ENCODE measurements at regions of chr1 and their contacts with region 1.

Region 1: DNA sequence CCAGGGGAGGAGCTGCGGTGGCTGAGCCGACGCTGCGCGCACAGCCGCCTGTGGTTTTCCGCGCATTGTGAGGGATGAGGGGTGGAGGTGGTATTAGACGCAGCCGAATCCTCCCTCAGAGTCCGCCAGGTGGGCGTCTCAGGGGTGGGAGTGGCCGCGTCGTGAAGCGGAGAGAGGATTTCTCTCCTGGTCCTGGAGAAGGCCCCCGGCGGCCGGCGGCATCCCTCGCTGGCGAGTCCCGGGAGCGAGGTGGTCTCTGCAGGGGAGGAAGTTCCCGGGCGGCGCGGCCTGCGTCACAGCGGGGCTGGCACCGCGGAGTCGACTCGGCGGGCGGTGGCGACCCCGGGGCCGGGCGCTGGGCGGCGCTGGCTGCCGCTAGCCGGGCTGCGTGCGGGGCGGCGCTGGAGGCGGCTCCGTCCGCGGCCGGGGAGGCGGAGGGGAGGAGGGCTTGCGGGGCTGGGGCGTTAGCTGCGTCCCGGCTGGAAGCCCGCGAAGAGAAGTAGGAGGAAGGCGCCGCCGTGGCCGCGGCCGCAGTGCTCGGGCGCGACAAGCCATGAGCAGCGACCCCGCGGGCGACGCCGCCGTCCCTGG is at the start of gene LRRC8C:
- DNase-seq: peak; percentile 84
- H3K4me3 Mint-ChIP-seq: peak within 1 kb of the TSS; percentile 92
- H3K27ac Mint-ChIP-seq: peak within 1 kb of the TSS; percentile 93
- H3K4me1 Mint-ChIP-seq: peaks cover 72% of the 10 kb centered on the region
- H3K27me3 Mint-ChIP-seq: no peaks in the 10 kb centered on the region
- total RNA-seq, gene LRRC8C: 56.1 and 56.5 TPM in 2 replicates

Region 2: GRCh38 chr1:89605692-89606091 is 27.1 kb before region 1 on chr1:
- intact Hi-C with region 1: loop called (anchors 1 kb)
- DNase-seq: no peak
- H3K4me3 Mint-ChIP-seq: peak overlapping the region; percentile 5
- H3K27ac Mint-ChIP-seq: peak overlapping the region; percentile 99
- H3K4me1 Mint-ChIP-seq: peaks cover 90% of the 10 kb centered on the region
- H3K27me3 Mint-ChIP-seq: no peaks in the 10 kb centered on the region

Region 3: DNA sequence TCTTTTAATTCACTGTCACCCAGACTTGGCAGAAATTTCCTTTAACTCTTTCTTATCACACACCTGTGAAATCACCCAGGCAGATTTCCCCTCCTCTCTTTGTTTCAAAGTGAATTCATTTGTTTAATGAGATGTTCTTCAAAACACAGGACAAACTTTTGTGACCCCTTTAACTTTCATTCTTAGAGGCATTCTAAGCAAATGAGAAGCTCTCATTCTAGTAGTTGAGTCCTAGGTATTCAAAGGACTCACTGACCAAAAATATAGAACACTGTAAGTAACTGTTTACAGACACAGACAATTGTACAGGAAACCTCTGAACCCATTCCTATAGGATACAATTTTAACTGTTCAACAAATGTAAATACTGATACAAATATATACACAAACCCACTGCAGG is 17.0 kb after region 1 on chr1:
- intact Hi-C with region 1: loop called (anchors 1 kb)
- DNase-seq: no peak
- H3K4me3 Mint-ChIP-seq: no peak overlapping the region
- H3K27ac Mint-ChIP-seq: peak overlapping the region; percentile 44
- H3K4me1 Mint-ChIP-seq: peaks cover 56% of the 10 kb centered on the region
- H3K27me3 Mint-ChIP-seq: no peaks in the 10 kb centered on the region

Region 4: GRCh38 chr1:89670163-89670562 is 37.4 kb after region 1 on chr1:
- intact Hi-C with region 1: loop called (anchors 5 kb)
- DNase-seq: no peak
- H3K4me3 Mint-ChIP-seq: peak overlapping the region; percentile 44
- H3K27ac Mint-ChIP-seq: peak overlapping the region; percentile 83
- H3K4me1 Mint-ChIP-seq: peaks cover 85% of the 10 kb centered on the region
- H3K27me3 Mint-ChIP-seq: no peaks in the 10 kb centered on the region

Region 5: DNA sequence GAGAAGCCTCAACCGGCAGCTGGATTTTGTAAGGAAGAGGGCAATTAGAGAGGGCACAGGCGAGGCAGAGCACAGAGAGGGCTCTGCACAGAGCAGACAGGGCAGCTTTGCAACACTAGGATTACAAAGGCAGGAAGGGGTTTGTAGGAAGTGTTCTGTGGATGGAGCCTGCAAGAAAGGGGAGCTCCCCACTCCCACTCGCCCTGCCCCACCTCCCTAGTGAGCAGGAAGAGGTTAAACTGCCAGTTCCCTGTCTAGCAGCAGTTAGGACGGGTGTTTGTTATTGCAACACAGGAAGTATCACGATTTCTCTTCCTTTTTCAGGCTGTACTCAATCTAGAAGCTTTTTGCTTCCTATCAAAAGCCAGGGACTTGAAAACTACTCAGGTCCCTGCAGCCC is 124.8 kb after region 1 on chr1:
- intact Hi-C with region 1: loop called (anchors 1 kb)
- DNase-seq: peak; percentile 57
- H3K4me3 Mint-ChIP-seq: peak overlapping the region; percentile 77
- H3K27ac Mint-ChIP-seq: peak overlapping the region; percentile 93
- H3K4me1 Mint-ChIP-seq: peaks cover 82% of the 10 kb centered on the region
- H3K27me3 Mint-ChIP-seq: no peaks in the 10 kb centered on the region

Region 6: DNA sequence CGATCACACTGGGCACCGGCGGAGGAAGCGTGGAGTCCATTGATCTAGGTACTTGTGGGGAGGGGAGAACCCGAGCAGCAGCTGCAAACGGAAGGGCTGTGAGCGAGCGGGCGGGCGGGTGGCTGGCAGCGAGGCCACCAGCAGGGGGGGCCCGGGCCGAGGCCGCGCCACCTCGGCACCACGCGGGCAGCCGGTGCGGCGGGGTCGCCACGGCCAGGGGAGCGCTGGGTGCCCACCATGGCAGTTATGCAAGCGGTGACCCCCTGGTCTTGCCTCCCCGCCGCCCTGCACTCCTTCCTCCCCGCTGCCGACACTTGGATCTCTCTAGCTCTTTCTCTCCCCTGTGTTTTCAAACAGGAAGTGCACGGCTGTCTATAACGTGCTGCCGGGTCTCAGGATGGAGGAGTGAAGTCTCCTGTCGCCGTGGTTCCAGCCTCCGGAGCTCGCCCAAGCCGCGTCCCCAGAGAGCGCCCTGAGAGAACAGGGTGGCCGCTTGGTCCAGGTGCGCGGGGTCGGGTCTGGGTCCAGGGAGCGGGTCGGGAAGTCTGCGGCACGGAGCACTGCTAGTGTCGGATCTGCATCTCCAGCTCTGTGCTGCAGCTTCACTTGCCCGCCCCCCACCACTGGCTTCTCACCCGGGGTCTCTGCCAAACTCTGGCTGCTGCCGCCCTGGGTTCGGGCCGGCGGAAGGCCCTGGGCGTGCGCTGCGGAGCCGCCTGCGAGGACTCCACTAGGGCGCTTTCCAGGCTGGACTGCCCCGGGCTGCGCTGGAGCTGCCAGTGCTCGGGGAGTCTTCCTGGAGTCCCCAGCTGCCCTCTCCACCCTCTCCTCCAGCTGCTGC is 210.7 kb after region 1 on chr1:
- intact Hi-C with region 1: loop called (anchors 5 kb)
- DNase-seq: peak; percentile 74
- H3K4me3 Mint-ChIP-seq: peak overlapping the region; percentile 93
- H3K27ac Mint-ChIP-seq: peak overlapping the region; percentile 94
- H3K4me1 Mint-ChIP-seq: peaks cover 68% of the 10 kb centered on the region
- H3K27me3 Mint-ChIP-seq: no peaks in the 10 kb centered on the region

Measured in activated T-helper 2 cell treated with anti-CD3 and anti-CD28 coated beads, Interferon-gamma antibody, Interleukin-2, Interleukin-4, amounts not matched to agents 10 μg/mL and 5 μg/mL and 100 μg/mL, durations not matched to agents 14 hours and 24 hours and 36 hours (primary cell).